Activated CD8-positive, alpha-beta T cell treated with anti-CD3 and anti-CD28 coated beads, Interleukin-2, amount 10 ng/mL, durations not matched to agents 7 days and 5 days (primary cell): ENCODE measurements at regions of chr6 and their contacts with region 1.

Region 1: DNA sequence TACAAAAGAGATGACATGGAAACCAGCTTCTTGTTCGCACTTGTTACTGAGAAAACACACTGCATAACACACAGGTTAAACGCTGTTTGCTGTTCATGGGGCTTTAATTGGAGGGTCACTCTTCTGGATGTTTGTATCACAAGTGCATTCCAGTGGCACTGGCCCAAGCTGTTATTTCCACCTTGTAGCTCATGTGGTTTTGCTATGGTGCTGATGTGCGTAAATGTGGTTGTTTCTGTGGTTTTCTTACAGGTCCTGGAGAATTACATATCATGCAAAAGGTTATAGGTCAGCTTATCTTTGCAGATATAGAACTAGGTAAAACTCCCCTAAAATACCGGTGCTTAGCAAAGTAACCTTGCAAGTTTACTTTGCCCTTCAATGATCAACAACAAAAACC is 89.3 kb upstream of the AHI1 start:
- DNase-seq: peak; percentile 53
- ATAC-seq: peak; percentile 75
- H3K4me3 Mint-ChIP-seq: peak overlapping the region; percentile 39
- H3K27ac Mint-ChIP-seq: peak overlapping the region; percentile 78
- H3K4me1 Mint-ChIP-seq: peaks cover 47% of the 10 kb centered on the region
- H3K27me3 Mint-ChIP-seq: no peaks in the 10 kb centered on the region

Region 2: DNA sequence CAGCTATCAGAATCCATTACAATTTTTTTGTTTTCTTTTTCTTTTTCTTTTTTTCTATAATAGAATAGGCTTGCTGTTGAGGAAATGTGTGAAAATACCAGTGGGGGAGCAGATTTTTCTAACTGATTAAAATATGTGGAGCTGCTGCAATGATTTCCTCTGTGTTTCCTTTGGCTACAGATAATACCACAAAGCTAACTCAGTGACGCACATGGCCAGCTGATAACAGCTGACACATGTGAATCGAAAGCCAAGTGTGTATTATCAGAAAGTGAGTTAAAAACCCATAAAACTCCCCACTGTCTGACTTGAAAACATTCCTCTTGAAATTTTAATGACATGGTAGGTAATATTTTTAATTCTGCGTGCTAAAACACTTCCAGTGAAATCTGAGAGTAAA is 18.5 kb before region 1 on chr6:
- CTCF ChIA-PET with region 1: interaction called, 19 read pairs
- POLR2A ChIA-PET with region 1: interaction called, 3 read pairs
- DNase-seq: peak; percentile 73
- ATAC-seq: peak; percentile 82
- H3K4me3 Mint-ChIP-seq: peak overlapping the region; percentile 10
- H3K27ac Mint-ChIP-seq: peak overlapping the region; percentile 76
- H3K4me1 Mint-ChIP-seq: peaks cover 50% of the 10 kb centered on the region
- H3K27me3 Mint-ChIP-seq: no peaks in the 10 kb centered on the region

Region 3: GRCh38 chr6:135667691-135668455 is 81.0 kb after region 1 on chr6:
- CTCF ChIA-PET with region 1: no interaction called
- POLR2A ChIA-PET with region 1: no interaction called
- DNase-seq: no peak
- ATAC-seq: no peak
- H3K4me3 Mint-ChIP-seq: no peak overlapping the region
- H3K27ac Mint-ChIP-seq: no peak overlapping the region
- H3K4me1 Mint-ChIP-seq: peaks cover 2% of the 10 kb centered on the region
- H3K27me3 Mint-ChIP-seq: peaks cover 3% of the 10 kb centered on the region